ENCODE measurements at regions of chr4 and their contacts with region 1.

Region 1: DNA sequence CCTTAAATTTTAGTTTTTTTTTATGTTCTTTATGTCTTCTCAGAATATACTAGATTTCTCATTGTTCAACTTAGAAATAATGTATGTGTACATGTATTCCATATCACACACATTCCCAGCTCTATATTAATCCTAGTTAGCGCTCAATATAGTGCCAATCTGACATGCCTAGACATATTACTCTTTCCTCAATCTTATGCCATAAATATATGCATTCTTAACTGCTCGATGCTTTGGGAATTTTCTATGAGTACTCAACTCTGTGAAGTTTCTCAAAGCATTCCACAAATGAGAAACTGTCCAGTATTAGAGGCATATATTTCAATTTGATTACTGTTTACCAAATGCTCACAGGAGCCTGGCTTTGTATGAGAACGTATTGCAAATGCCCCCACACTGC is 231.2 kb upstream of the VEGFC start:
- DNase-seq: no peak
- H3K4me3 ChIP-seq: no peak overlapping the region
- CTCF ChIP-seq: no peak
- POLR2A ChIP-seq: no peak

Region 2: DNA sequence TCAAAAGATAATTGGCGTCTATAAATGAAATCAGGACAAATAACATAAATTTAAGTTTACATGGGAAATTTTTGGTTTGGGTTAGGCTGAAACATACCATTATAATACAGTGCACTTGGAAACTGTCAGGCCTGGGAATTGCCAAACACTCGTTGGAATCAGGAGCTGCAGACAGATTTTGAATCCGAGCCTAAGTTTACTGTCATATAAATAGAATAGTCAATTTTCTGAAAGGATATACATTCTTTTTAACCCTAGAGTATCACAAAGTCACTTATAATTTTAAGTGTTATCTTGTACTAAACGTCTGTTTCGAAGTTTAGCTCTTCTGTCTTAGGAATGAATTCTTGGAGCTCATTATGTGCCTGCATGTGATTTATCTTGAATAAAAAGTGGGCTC is 465.3 kb before region 1 on chr4:
- intact Hi-C with region 1: loop called (anchors 10 kb)
- DNase-seq: no peak
- H3K4me3 ChIP-seq: no peak overlapping the region
- CTCF ChIP-seq: no peak
- POLR2A ChIP-seq: no peak